ENCODE measurements at regions of chr13 and their contacts with region 1.

Region 1: DNA sequence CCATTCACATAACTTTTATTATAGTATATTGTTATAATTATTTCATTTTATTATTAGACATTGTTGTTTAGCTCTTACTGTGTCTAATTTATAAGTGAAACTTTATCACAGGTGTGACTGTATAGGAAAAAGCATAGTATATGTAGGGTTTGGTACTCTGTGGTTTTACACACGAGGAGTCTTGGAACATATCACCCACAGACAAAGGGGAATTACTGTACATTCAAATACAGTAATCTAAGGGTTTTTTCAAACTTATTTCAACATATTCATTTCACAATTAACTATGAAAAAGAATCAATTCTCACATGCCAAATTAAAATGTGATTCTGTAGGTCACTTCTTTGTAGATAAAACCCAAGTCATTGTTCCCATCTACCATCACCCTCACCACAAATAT is 46.0 kb downstream of the RBM26 start:
- DNase-seq: no peak
- ATAC-seq: no peak
- H3K4me3 Mint-ChIP-seq: no peak overlapping the region
- H3K27ac Mint-ChIP-seq: no peak overlapping the region
- H3K4me1 Mint-ChIP-seq: peaks cover 12% of the 10 kb centered on the region
- H3K27me3 Mint-ChIP-seq: no peaks in the 10 kb centered on the region
- CTCF ChIP-seq: no peak

Region 2: DNA sequence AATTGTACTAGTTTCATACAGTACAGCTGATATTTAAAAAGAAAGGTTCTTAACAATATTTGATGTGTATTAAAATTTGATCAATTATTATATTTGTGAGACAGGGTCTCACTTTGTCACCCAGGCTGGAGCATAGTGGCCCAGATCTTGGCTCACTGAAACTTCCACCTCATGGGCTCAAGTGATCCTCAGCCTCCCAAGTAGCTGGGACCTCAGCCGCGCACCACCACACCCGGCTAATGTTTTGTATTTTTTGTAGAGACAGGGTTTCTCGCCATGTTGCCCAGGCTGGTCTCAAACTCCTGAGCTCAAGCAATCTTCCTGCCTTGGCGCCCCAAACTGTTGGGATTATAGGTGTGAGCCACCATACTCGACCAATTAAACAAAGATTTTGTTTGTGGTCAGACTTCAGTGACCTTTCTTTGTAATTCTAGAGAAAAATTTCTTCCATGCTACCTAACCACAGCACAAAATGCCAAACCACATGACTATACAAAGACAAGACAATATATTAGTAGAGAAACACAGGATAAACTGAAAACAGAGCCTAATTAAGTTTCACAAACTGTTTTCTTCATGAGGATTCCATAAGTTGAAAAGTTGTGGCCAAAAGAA is 13.7 kb before region 1 on chr13:
- CTCF ChIA-PET with region 1: no interaction called
- POLR2A ChIA-PET with region 1: no interaction called
- intact Hi-C with region 1: loop called (anchors 2 kb)
- DNase-seq: no peak
- ATAC-seq: no peak
- H3K4me3 Mint-ChIP-seq: no peak overlapping the region
- H3K27ac Mint-ChIP-seq: no peak overlapping the region
- H3K4me1 Mint-ChIP-seq: no peaks in the 10 kb centered on the region
- H3K27me3 Mint-ChIP-seq: no peaks in the 10 kb centered on the region
- CTCF ChIP-seq: no peak

Measured in activated B cell treated with CpG ODN at 0.5 μM for 24 hours (primary cell).